PC-3 (cell line): ENCODE measurements at regions of chr17 and their contacts with region 1.

Region 1: GRCh38 chr17:15257258-15257788 is 7.8 kb downstream of the PMP22 start:
- DNase-seq: peak; percentile 99
- ATAC-seq: peak; percentile 42
- H3K4me3 ChIP-seq: peak overlapping the region; percentile 90
- H3K27ac ChIP-seq: peak overlapping the region; percentile 83
- H3K4me1 ChIP-seq: peaks cover 40% of the 10 kb centered on the region
- H3K27me3 ChIP-seq: no peaks in the 10 kb centered on the region
- CTCF ChIP-seq: peak; percentile 98

Region 2: DNA sequence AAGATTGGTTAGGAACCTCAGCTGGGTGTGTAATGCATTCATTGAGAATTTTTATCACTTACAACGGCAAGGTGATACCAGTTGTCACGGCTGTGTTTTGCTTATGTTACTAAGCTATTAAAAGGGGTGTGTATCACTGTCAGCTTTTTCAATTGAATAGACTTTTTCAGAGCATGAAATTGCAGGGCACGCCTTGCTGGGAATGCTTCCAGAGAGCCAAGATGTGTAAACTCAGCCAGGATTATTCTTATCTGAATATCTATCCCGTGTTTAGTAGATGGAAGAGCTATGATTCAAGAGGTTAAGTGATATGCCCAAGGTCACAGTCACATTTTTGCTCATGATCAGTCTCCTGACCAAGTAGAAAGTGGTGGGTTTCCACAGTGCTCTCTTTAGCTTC is 90.7 kb after region 1 on chr17:
- CTCF ChIA-PET with region 1: interaction called, 3 read pairs
- POLR2A ChIA-PET with region 1: no interaction called
- intact Hi-C with region 1: loop called (anchors 2 kb)
- DNase-seq: peak; percentile 85
- ATAC-seq: peak; percentile 74
- H3K4me3 ChIP-seq: no peak overlapping the region
- H3K27ac ChIP-seq: peak overlapping the region; percentile 64
- H3K4me1 ChIP-seq: peaks cover 61% of the 10 kb centered on the region
- H3K27me3 ChIP-seq: no peaks in the 10 kb centered on the region
- CTCF ChIP-seq: no peak

Region 3: GRCh38 chr17:15377616-15378015 is 120.3 kb after region 1 on chr17:
- CTCF ChIA-PET with region 1: interaction called, 3 read pairs
- POLR2A ChIA-PET with region 1: no interaction called
- intact Hi-C with region 1: loop called (anchors 1 kb)
- DNase-seq: peak; percentile 97
- ATAC-seq: peak; percentile 74
- H3K4me3 ChIP-seq: peak overlapping the region; percentile 47
- H3K27ac ChIP-seq: peak overlapping the region; percentile 93
- H3K4me1 ChIP-seq: peaks cover 44% of the 10 kb centered on the region
- H3K27me3 ChIP-seq: no peaks in the 10 kb centered on the region
- CTCF ChIP-seq: no peak